Naive thymus-derived CD8-positive, alpha-beta T cell (primary cell): ENCODE measurements at regions of chr12 and their contacts with region 1.

Region 1: GRCh38 chr12:12356886-12357718 is at the start of gene BORCS5:
- DNase-seq: peak; percentile 91 to 99 (median 98)
- ATAC-seq: peak; percentile 89 to 93
- H3K4me3 Mint-ChIP-seq: peak within 1 kb of the TSS; percentile 90 to 98 (median 96)
- H3K27ac Mint-ChIP-seq: peak within 1 kb of the TSS; percentile 95 to 100 (median 99)
- H3K4me1 Mint-ChIP-seq: peaks cover 24 to 52% (median 45%) of the 10 kb centered on the region in 4 donors
- H3K27me3 Mint-ChIP-seq: no peaks in the 10 kb centered on the region
- polyA plus RNA-seq, gene BORCS5: 14.2 to 18.4 (median 15.7) TPM

Region 2: DNA sequence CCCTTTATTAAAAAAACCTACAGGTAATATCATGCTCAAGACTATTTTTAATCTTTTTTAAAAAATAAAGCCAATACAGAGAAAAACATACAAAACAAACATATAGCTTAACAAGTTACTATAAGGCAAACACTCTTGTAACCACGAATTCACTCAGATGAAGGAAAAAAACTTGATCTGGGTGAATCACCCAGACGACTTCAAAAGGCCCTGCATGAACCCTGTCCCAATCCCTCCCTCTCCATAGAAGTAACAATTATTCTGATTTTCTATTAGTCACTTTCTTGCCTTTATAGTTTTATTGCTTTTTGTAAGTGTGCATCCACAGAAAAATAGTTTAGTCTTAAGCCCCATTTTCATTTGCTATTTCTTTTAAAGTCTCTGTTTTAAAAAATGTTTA is 162.9 kb before region 1 on chr12:
- POLR2A ChIA-PET with region 1: no interaction called
- DNase-seq: no peak
- ATAC-seq: no peak
- H3K4me3 Mint-ChIP-seq: no peak overlapping the region
- H3K27ac Mint-ChIP-seq: no peak overlapping the region
- H3K4me1 Mint-ChIP-seq: peaks cover 0 to 8% (median 3%) of the 10 kb centered on the region in 4 donors
- H3K27me3 Mint-ChIP-seq: peaks cover 0 to 18% (median 0%) of the 10 kb centered on the region in 5 donors

Region 3: GRCh38 chr12:12224240-12224940 is 132.7 kb before region 1 on chr12:
- POLR2A ChIA-PET with region 1: no interaction called
- DNase-seq: no peak
- ATAC-seq: no peak
- H3K4me3 Mint-ChIP-seq: no peak overlapping the region
- H3K27ac Mint-ChIP-seq: no peak overlapping the region
- H3K4me1 Mint-ChIP-seq: peaks cover 0 to 13% (median 11%) of the 10 kb centered on the region in 4 donors
- H3K27me3 Mint-ChIP-seq: peaks cover 0 to 8% (median 2%) of the 10 kb centered on the region in 5 donors

Region 4: GRCh38 chr12:12294215-12295005 is 62.7 kb before region 1 on chr12:
- POLR2A ChIA-PET with region 1: no interaction called
- DNase-seq: no peak
- ATAC-seq: no peak
- H3K4me3 Mint-ChIP-seq: no peak overlapping the region
- H3K27ac Mint-ChIP-seq: no peak overlapping the region
- H3K4me1 Mint-ChIP-seq: peaks cover 7 to 11% (median 9%) of the 10 kb centered on the region in 4 donors
- H3K27me3 Mint-ChIP-seq: no peaks in the 10 kb centered on the region

Region 5: GRCh38 chr12:12336511-12336910 is 20.6 kb before region 1 on chr12:
- POLR2A ChIA-PET with region 1: interaction called, 11 read pairs
- DNase-seq: no peak
- ATAC-seq: no peak
- H3K4me3 Mint-ChIP-seq: no peak overlapping the region
- H3K27ac Mint-ChIP-seq: no peak overlapping the region
- H3K4me1 Mint-ChIP-seq: peaks cover 15 to 32% (median 27%) of the 10 kb centered on the region in 4 donors
- H3K27me3 Mint-ChIP-seq: no peaks in the 10 kb centered on the region

Region 6: GRCh38 chr12:12387501-12387900 is 30.4 kb after region 1 on chr12:
- POLR2A ChIA-PET with region 1: no interaction called
- DNase-seq: no peak
- ATAC-seq: no peak
- H3K4me3 Mint-ChIP-seq: peak overlapping the region in 1 of 10 donors; percentile 7
- H3K27ac Mint-ChIP-seq: peak overlapping the region in 2 of 10 donors; percentile 47 to 61
- H3K4me1 Mint-ChIP-seq: peaks cover 14 to 52% (median 25%) of the 10 kb centered on the region in 4 donors
- H3K27me3 Mint-ChIP-seq: no peaks in the 10 kb centered on the region

Region 7: GRCh38 chr12:12696562-12697383 is 339.7 kb after region 1 on chr12:
- POLR2A ChIA-PET with region 1: interaction called, 20 read pairs
- DNase-seq: peak; percentile 82 to 96 (median 93)
- ATAC-seq: peak; percentile 88 to 90
- H3K4me3 Mint-ChIP-seq: peak overlapping the region; percentile 86 to 97 (median 94)
- H3K27ac Mint-ChIP-seq: peak overlapping the region; percentile 98 to 100 (median 100)
- H3K4me1 Mint-ChIP-seq: peaks cover 12 to 35% (median 30%) of the 10 kb centered on the region in 4 donors
- H3K27me3 Mint-ChIP-seq: no peaks in the 10 kb centered on the region